ENCODE measurements at regions of chr1 and their contacts with region 1.

Region 1: DNA sequence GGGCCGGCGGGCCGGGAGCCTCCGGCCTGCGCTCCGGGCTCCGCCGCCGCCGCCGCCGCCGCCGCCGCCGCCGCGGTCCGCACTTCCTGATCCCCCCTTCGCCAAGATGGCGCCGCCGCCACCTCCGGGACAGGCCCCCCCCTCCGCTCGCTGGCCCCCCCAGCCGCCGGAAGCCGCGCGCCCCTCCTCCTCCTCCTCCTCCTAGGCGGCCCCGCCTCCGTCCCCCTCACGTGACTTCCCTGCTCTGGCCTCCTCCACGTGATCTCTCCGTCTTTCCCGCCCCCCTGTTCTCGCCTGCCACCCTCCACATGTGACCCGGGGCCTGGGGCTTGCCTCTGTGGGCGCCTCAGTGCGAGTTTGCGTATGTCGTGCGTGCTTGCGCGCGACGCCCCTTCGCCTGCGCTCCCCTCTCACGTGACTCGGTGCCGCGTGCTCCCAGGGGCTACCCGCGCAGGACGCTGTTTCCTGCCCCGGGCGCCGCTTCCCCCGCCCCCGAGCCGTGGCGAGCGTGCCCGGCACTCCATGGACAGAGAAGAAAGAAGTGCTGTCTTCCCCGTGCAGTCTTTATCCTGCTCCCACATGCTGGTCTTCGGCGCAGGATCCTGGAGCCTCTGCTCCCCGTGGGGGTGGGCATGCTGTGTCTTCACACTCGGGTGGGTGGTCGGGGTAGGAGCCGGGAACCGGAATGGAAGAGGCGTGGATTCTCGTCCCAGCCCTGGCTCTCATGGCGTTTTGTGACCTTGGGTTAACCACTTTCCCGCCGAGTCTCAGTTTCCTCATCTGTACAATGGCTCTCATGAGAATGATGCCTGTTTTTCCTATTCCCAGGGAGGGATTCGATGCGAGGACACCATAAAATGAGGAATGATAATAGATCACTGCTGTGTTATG is at the start of gene UBE2Q1:
- DNase-seq: peak; percentile 100
- H3K4me3 ChIP-seq: peak within 1 kb of the TSS; percentile 79 to 95 (median 88)
- H3K27ac ChIP-seq: peak within 1 kb of the TSS; percentile 94 to 96 (median 94)
- H3K4me1 ChIP-seq: peaks cover 0 to 39% (median 34%) of the 10 kb centered on the region in 4 donors
- H3K27me3 ChIP-seq: no peaks in the 10 kb centered on the region
- CTCF ChIP-seq: no peak
- EP300 ChIP-seq: peak in 3 of 4 donors; percentile 41 to 97 (median 61)
- POLR2A ChIP-seq: peak in 1 of 2 donors; percentile 22
- total RNA-seq, gene UBE2Q1: 15.1 to 18.9 (median 16.3) TPM

Region 2: GRCh38 chr1:154404984-154405761 is 153.6 kb before region 1 on chr1 and contains the start of gene IL6R:
- intact Hi-C with region 1: loop called (anchors 5 kb)
- DNase-seq: peak; percentile 99
- H3K4me3 ChIP-seq: peak within 1 kb of the TSS; percentile 65 to 90 (median 84)
- H3K27ac ChIP-seq: peak within 1 kb of the TSS; percentile 98 to 99 (median 98)
- H3K4me1 ChIP-seq: peaks cover 0 to 47% (median 44%) of the 10 kb centered on the region in 4 donors
- H3K27me3 ChIP-seq: no peaks in the 10 kb centered on the region
- CTCF ChIP-seq: peak; percentile 40 to 52 (median 52)
- EP300 ChIP-seq: peak in 3 of 4 donors; percentile 61 to 85 (median 70)
- POLR2A ChIP-seq: peak; percentile 57 to 82
- total RNA-seq, gene IL6R: 22.9 to 40.2 (median 36.6) TPM

Region 3: GRCh38 chr1:154627257-154628120 is 68.7 kb after region 1 on chr1:
- intact Hi-C with region 1: loop called (anchors 2 kb)
- DNase-seq: peak; percentile 93
- H3K4me3 ChIP-seq: peak overlapping the region; percentile 60 to 96 (median 82)
- H3K27ac ChIP-seq: peak overlapping the region; percentile 84 to 93 (median 92)
- H3K4me1 ChIP-seq: peaks cover 0 to 22% (median 12%) of the 10 kb centered on the region in 4 donors
- H3K27me3 ChIP-seq: no peaks in the 10 kb centered on the region
- CTCF ChIP-seq: no peak
- EP300 ChIP-seq: no peak
- POLR2A ChIP-seq: no peak

Region 4: DNA sequence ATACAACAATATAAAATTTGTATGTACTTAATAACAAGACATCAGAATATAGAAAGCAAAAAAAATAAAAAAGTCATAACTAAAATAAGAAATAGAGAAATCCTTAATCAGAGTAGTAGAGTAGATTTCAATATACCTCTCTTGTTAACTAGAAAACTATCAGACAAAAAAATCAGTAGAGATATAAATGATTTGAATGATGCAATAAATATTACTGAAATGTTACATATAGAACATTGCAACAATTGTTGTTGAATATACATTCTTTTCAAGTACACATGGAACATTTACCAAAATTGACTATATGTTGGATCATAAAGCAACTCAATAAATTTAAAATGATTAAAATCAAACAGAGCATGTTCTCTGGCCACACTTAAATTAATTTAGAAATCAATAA is 81.1 kb after region 1 on chr1:
- intact Hi-C with region 1: no loop called
- DNase-seq: no peak
- H3K4me3 ChIP-seq: no peak overlapping the region
- H3K27ac ChIP-seq: no peak overlapping the region
- H3K4me1 ChIP-seq: no peaks in the 10 kb centered on the region
- H3K27me3 ChIP-seq: no peaks in the 10 kb centered on the region
- CTCF ChIP-seq: no peak
- EP300 ChIP-seq: no peak
- POLR2A ChIP-seq: no peak

Region 5: DNA sequence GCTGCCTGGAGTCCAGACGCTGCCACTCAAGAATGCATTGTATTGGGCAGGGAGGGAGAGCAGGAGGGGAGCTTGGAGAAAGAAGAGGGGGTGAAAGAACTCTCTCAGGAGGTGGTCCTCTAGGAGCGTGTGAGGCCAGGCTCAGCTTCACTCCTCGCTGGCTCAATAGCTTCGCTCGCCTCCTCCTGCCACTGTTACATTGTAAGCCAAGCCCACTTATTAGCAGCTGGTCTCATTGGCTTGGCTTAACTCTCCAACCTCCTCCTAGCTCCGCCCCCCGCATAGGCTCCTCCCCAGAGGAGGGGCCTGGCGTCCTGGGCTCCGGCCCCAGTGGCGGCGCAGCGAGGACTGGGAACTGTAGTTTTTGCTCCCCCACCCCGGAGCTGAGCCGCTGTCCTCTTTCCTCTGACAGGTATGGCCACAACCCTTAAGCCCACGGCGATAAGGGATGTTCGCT is 311.3 kb after region 1 on chr1 and contains the start of gene KCNN3:
- intact Hi-C with region 1: loop called (anchors 2 kb)
- DNase-seq: peak; percentile 96
- H3K4me3 ChIP-seq: peak within 1 kb of the TSS; percentile 34 to 50 (median 45)
- H3K27ac ChIP-seq: peak within 1 kb of the TSS; percentile 27 to 59 (median 50)
- H3K4me1 ChIP-seq: peaks cover 0 to 39% (median 28%) of the 10 kb centered on the region in 4 donors
- H3K27me3 ChIP-seq: peaks cover 0 to 27% (median 25%) of the 10 kb centered on the region in 3 donors
- CTCF ChIP-seq: no peak
- EP300 ChIP-seq: no peak
- POLR2A ChIP-seq: peak; percentile 26
- total RNA-seq, gene KCNN3: 9.4 to 27.7 (median 17.7) TPM

Region 6: GRCh38 chr1:154936555-154937084 is 377.8 kb after region 1 on chr1 and contains the start of gene PMVK:
- intact Hi-C with region 1: loop called (anchors 2 kb)
- DNase-seq: peak; percentile 99
- H3K4me3 ChIP-seq: peak within 1 kb of the TSS; percentile 66 to 80 (median 70)
- H3K27ac ChIP-seq: peak within 1 kb of the TSS; percentile 90 to 98 (median 96)
- H3K4me1 ChIP-seq: peaks cover 0 to 38% (median 28%) of the 10 kb centered on the region in 4 donors
- H3K27me3 ChIP-seq: no peaks in the 10 kb centered on the region
- CTCF ChIP-seq: peak in 3 of 4 experiments; percentile 16 to 29 (median 28)
- EP300 ChIP-seq: no peak
- POLR2A ChIP-seq: peak; percentile 51 to 54
- total RNA-seq, gene PMVK: 11.1 to 19.6 (median 13.7) TPM

Measured in sigmoid colon (tissue), 7 donors.